Kidney (tissue), 22 donors: ENCODE measurements at regions of chr6 and their contacts with region 1.

Region 1: GRCh38 chr6:46390153-46390876 is 100.9 kb downstream of the RCAN2 start:
- DNase-seq: no peak
- H3K4me3 ChIP-seq: no peak overlapping the region
- H3K27ac ChIP-seq: no peak overlapping the region
- H3K4me1 ChIP-seq: no peaks in the 10 kb centered on the region
- H3K27me3 ChIP-seq: no peaks in the 10 kb centered on the region
- CTCF ChIP-seq: no peak

Region 2: DNA sequence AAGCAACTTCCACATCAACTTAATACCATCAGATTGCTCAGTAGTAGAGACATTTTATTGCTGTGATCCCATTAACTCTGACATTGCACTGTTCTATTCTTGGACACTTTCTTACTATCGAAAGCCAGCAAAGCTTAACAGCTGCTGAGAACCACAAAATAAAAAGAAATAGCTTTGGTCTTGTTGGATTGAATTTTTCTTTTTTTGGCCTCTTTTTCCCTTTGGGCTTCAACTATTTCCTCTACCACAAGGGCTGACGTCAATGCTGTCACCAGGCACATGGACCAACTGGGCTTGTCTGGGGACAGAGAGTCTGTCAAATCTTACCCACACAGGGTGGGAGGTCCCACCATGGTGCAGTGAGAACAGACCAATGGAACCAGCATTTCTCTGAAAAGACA is 156.2 kb before region 1 on chr6:
- intact Hi-C with region 1: loop called (anchors 10 kb)
- DNase-seq: peak in 2 of 5 donors; percentile 66 to 79
- H3K4me3 ChIP-seq: no peak overlapping the region
- H3K27ac ChIP-seq: peak overlapping the region in 1 of 2 donors; percentile 43
- H3K4me1 ChIP-seq: no peaks in the 10 kb centered on the region
- H3K27me3 ChIP-seq: no peaks in the 10 kb centered on the region
- CTCF ChIP-seq: no peak

Region 3: GRCh38 chr6:46530896-46531295 is 140.6 kb after region 1 on chr6:
- intact Hi-C with region 1: no loop called
- DNase-seq: no peak
- H3K4me3 ChIP-seq: no peak overlapping the region
- H3K27ac ChIP-seq: no peak overlapping the region
- H3K4me1 ChIP-seq: no peaks in the 10 kb centered on the region
- H3K27me3 ChIP-seq: no peaks in the 10 kb centered on the region
- CTCF ChIP-seq: no peak

Region 4: GRCh38 chr6:46730921-46731461 is 340.7 kb after region 1 on chr6:
- intact Hi-C with region 1: no loop called
- DNase-seq: no peak
- H3K4me3 ChIP-seq: no peak overlapping the region
- H3K27ac ChIP-seq: no peak overlapping the region
- H3K4me1 ChIP-seq: no peaks in the 10 kb centered on the region
- H3K27me3 ChIP-seq: peaks cover 4% of the 10 kb centered on the region
- CTCF ChIP-seq: no peak